ENCODE measurements at regions of chr9 and their contacts with region 1.

Region 1: DNA sequence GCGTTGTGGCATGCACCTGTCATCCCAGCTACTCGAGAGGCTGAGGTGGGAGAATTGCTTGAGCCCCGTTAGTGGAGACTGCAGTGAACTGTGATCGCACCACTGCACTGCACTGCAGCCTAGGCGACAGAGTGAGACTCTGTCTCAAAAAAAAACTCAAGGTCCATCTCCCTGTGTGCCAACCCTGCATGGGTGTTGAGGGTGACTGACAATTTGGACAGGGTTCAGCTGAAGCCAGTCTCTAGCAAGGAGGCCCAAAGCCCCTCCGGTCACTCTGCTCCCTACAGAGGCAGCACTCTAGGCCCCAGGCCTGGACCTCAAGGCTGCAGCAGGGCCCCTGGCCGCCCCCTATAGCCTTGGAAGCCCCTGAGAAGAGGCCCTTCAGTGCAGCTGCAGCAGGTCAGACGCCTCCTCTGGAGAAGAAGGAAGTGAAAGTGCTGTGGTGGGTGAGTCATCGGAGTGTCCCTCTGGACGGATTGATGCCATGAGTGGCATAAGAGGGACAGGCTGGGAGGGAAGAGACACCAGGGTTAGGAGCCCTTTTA is 39.2 kb upstream of the NEK6 start:
- DNase-seq: peak; percentile 26
- H3K4me3 Mint-ChIP-seq: no peak overlapping the region
- H3K27ac Mint-ChIP-seq: peak overlapping the region; percentile 69
- H3K4me1 Mint-ChIP-seq: peaks cover 59% of the 10 kb centered on the region
- H3K27me3 Mint-ChIP-seq: peaks cover 5% of the 10 kb centered on the region

Region 2: GRCh38 chr9:124197177-124198095 is 21.1 kb before region 1 on chr9:
- intact Hi-C with region 1: loop called (anchors 1 kb)
- DNase-seq: no peak
- H3K4me3 Mint-ChIP-seq: peak overlapping the region; percentile 34
- H3K27ac Mint-ChIP-seq: peak overlapping the region; percentile 67
- H3K4me1 Mint-ChIP-seq: peaks cover 44% of the 10 kb centered on the region
- H3K27me3 Mint-ChIP-seq: peaks cover 10% of the 10 kb centered on the region

Region 3: GRCh38 chr9:124202447-124202971 is 16.0 kb before region 1 on chr9:
- intact Hi-C with region 1: loop called (anchors 1 kb)
- DNase-seq: peak; percentile 71
- H3K4me3 Mint-ChIP-seq: peak overlapping the region; percentile 58
- H3K27ac Mint-ChIP-seq: peak overlapping the region; percentile 95
- H3K4me1 Mint-ChIP-seq: peaks cover 69% of the 10 kb centered on the region
- H3K27me3 Mint-ChIP-seq: peaks cover 2% of the 10 kb centered on the region

Region 4: DNA sequence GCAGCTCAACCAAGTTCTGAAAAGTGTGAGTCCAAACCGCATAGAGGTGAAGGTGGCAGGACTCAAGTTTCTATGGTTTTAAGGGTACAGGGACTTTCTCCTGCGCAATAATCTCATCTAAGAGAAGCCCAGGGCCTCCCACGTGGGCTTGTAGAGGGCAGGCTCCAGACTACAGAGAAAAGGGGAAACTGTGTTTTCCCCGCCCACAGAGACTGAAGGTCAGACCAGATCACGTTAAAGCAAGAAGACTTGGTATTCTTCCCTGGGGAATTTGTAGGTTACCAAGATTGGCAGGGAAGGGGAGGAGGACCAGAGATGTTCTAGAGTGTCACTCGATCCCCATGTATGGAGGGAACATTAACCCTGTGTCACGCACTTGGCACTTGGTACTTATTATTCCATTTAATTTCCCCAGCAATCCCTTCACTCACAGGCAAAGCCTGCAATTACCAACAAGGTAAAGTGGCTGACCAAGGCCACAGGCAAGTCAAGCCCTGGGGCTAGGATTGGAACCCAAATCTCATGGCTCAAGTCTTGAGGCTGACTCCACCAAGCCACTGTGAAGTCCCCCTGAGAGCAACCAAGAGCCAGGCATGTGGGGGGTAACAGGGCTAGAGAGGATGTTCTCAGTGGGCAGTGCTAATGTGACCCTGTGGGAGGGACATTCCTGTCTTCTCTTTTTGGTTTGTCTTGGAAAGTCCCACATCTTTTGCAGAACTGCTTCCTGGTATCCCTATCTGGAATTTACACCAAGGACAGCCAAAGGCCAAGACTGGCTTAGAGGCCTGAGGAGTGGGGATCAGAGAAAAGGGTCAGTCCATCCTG is 21.0 kb after region 1 on chr9:
- intact Hi-C with region 1: loop called (anchors 1 kb)
- DNase-seq: no peak
- H3K4me3 Mint-ChIP-seq: peak overlapping the region; percentile 6
- H3K27ac Mint-ChIP-seq: peak overlapping the region; percentile 61
- H3K4me1 Mint-ChIP-seq: peaks cover 53% of the 10 kb centered on the region
- H3K27me3 Mint-ChIP-seq: peaks cover 16% of the 10 kb centered on the region

Region 5: DNA sequence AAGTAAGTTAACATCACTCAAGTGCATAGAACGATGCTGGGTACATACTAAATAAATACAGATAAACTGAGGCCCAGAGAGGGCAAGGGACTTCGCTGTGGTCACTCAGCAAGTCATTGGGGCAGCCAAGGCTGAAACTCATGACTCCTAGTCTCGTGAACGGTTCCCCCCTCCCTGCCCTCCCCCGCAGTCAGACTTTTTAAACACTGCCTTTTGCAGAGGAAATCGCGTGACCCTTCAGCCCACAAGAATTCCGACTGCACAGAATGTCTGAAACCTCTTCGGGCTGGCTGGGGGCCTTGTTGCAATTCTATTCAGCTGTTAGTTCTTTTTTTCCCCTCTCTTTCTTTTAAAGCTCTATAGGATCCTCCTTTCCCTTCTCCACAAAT is 67.4 kb after region 1 on chr9:
- intact Hi-C with region 1: loop called (anchors 2 kb)
- DNase-seq: no peak
- H3K4me3 Mint-ChIP-seq: peak overlapping the region; percentile 67
- H3K27ac Mint-ChIP-seq: peak overlapping the region; percentile 85
- H3K4me1 Mint-ChIP-seq: peaks cover 21% of the 10 kb centered on the region
- H3K27me3 Mint-ChIP-seq: no peaks in the 10 kb centered on the region

Region 6: DNA sequence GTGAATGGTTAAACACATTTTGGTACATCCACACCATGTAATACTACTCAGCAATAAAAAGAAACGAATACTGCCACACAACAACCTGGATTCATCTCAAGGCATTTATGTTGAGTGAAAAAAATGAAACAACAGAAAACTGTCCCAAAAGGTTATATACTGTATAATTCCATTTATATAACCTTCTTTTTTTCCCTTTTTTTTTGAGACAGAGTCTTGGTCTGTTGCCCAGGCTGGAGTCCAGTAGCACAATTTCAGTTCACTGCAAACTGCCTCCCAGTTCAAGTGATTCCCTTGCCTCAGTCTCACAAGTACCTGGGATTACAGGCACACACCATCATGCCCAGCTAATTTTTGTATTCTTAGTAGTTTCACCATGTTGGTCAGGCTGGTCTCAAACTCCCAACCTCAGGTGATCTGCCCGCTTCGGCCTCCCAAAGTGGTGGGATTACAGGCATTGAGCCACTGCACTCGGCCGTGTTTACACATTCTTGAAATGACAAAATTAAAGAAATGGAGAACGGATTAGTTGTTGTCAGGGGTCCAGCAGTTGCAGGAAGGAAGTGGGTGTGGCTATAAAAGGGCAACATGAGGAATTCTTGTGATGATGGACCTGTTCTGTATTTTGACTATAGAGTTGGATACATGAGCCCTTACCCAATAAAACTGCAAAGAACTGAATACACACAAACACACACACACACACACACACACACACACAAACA is 953.7 kb after region 1 on chr9:
- intact Hi-C with region 1: no loop called
- DNase-seq: no peak
- H3K4me3 Mint-ChIP-seq: no peak overlapping the region
- H3K27ac Mint-ChIP-seq: no peak overlapping the region
- H3K4me1 Mint-ChIP-seq: peaks cover 8% of the 10 kb centered on the region
- H3K27me3 Mint-ChIP-seq: no peaks in the 10 kb centered on the region

Measured in activated T-helper 1 cell treated with anti-CD3 and anti-CD28 coated beads, Interleukin-12 subunit alpha, Interleukin-12 subunit beta, Interleukin-2, Interleukin-4 antibody, amounts not matched to agents 30 ng/mL and 10 ng/mL and 1 ng/mL, durations not matched to agents 14 hours and 24 hours and 36 hours (primary cell).